Posterior vena cava (tissue), 2 donors: ENCODE measurements at regions of chr15 and their contacts with region 1.

Region 1: GRCh38 chr15:71386448-71387236 is 271.4 kb downstream of the THSD4 start:
- DNase-seq: no peak

Region 2: GRCh38 chr15:71437404-71438318 is 51.0 kb after region 1 on chr15:
- intact Hi-C with region 1: loop called in 1 of 2 experiments (anchors 10 kb)
- DNase-seq: no peak